H1 (cell line): ENCODE measurements at regions of chr7 and their contacts with region 1.

Region 1: GRCh38 chr7:132249614-132249972 is 326.7 kb downstream of the PLXNA4 start:
- DNase-seq: peak; percentile 44 to 56
- H3K4me3 ChIP-seq: no peak overlapping the region
- H3K27ac ChIP-seq: no peak overlapping the region
- H3K4me1 ChIP-seq: peaks cover 6 to 17% (median 15%) of the 10 kb centered on the region in 4 experiments; a peak in 6 of 7 replicates
- H3K27me3 ChIP-seq: no peaks in the 10 kb centered on the region; a peak in 1 of 7 replicates
- CTCF ChIP-seq: peak; percentile 60 to 82 (median 76)
- EP300 ChIP-seq: no peak
- POLR2A ChIP-seq: no peak
- RAD21 ChIP-seq: peak; percentile 77 to 88

Region 2: GRCh38 chr7:131945313-131945911 is 304.2 kb before region 1 on chr7:
- CTCF ChIA-PET with region 1: interaction called, 13 read pairs
- POLR2A ChIA-PET with region 1: no interaction called
- DNase-seq: peak; percentile 46 to 90
- H3K4me3 ChIP-seq: peak overlapping the region in 1 of 4 experiments; percentile 33; a peak in 3 of 8 replicates
- H3K27ac ChIP-seq: no peak overlapping the region
- H3K4me1 ChIP-seq: no peaks in the 10 kb centered on the region; a peak in 1 of 7 replicates
- H3K27me3 ChIP-seq: peaks cover 0 to 14% (median 6%) of the 10 kb centered on the region in 4 experiments; a peak in 3 of 7 replicates
- CTCF ChIP-seq: peak; percentile 69 to 98 (median 81)
- EP300 ChIP-seq: no peak; a peak in 1 of 3 replicates
- POLR2A ChIP-seq: no peak
- RAD21 ChIP-seq: peak; percentile 97 to 99

Region 3: GRCh38 chr7:132154248-132154647 is 95.3 kb before region 1 on chr7:
- CTCF ChIA-PET with region 1: interaction called, 29 read pairs
- POLR2A ChIA-PET with region 1: no interaction called
- DNase-seq: no peak
- H3K4me3 ChIP-seq: no peak overlapping the region
- H3K27ac ChIP-seq: no peak overlapping the region
- H3K4me1 ChIP-seq: peaks cover 0 to 9% (median 1%) of the 10 kb centered on the region in 4 experiments; a peak in 5 of 7 replicates
- H3K27me3 ChIP-seq: no peaks in the 10 kb centered on the region
- CTCF ChIP-seq: no peak; a peak in 1 of 4 replicates
- EP300 ChIP-seq: no peak
- POLR2A ChIP-seq: no peak
- RAD21 ChIP-seq: no peak

Region 4: GRCh38 chr7:132239422-132239994 is 10.1 kb before region 1 on chr7:
- CTCF ChIA-PET with region 1: interaction called, 34 read pairs
- POLR2A ChIA-PET with region 1: no interaction called
- DNase-seq: no peak
- H3K4me3 ChIP-seq: no peak overlapping the region
- H3K27ac ChIP-seq: no peak overlapping the region
- H3K4me1 ChIP-seq: peaks cover 0 to 3% (median 1%) of the 10 kb centered on the region in 4 experiments; a peak in 3 of 7 replicates
- H3K27me3 ChIP-seq: no peaks in the 10 kb centered on the region
- CTCF ChIP-seq: peak; percentile 22 to 64 (median 33); a peak in 3 of 4 replicates
- EP300 ChIP-seq: no peak
- POLR2A ChIP-seq: no peak
- RAD21 ChIP-seq: peak; percentile 33 to 54; a peak in 3 of 4 replicates

Region 5: GRCh38 chr7:132298790-132299189 is 49.2 kb after region 1 on chr7:
- CTCF ChIA-PET with region 1: no interaction called
- POLR2A ChIA-PET with region 1: no interaction called
- DNase-seq: no peak
- H3K4me3 ChIP-seq: no peak overlapping the region
- H3K27ac ChIP-seq: no peak overlapping the region
- H3K4me1 ChIP-seq: no peaks in the 10 kb centered on the region
- H3K27me3 ChIP-seq: no peaks in the 10 kb centered on the region
- CTCF ChIP-seq: no peak
- EP300 ChIP-seq: no peak
- POLR2A ChIP-seq: no peak
- RAD21 ChIP-seq: no peak

Region 6: GRCh38 chr7:132480534-132480933 is 230.9 kb after region 1 on chr7:
- CTCF ChIA-PET with region 1: no interaction called
- POLR2A ChIA-PET with region 1: no interaction called
- DNase-seq: no peak
- H3K4me3 ChIP-seq: no peak overlapping the region
- H3K27ac ChIP-seq: no peak overlapping the region
- H3K4me1 ChIP-seq: peaks cover 2 to 8% (median 4%) of the 10 kb centered on the region in 4 experiments; a peak in 4 of 7 replicates
- H3K27me3 ChIP-seq: no peaks in the 10 kb centered on the region; a peak in 1 of 7 replicates
- CTCF ChIP-seq: no peak
- EP300 ChIP-seq: no peak
- POLR2A ChIP-seq: no peak
- RAD21 ChIP-seq: no peak